Activated B cell treated with CpG ODN at 0.5 μM for 24 hours (primary cell): ENCODE measurements at regions of chr3 and their contacts with region 1.

Region 1: DNA sequence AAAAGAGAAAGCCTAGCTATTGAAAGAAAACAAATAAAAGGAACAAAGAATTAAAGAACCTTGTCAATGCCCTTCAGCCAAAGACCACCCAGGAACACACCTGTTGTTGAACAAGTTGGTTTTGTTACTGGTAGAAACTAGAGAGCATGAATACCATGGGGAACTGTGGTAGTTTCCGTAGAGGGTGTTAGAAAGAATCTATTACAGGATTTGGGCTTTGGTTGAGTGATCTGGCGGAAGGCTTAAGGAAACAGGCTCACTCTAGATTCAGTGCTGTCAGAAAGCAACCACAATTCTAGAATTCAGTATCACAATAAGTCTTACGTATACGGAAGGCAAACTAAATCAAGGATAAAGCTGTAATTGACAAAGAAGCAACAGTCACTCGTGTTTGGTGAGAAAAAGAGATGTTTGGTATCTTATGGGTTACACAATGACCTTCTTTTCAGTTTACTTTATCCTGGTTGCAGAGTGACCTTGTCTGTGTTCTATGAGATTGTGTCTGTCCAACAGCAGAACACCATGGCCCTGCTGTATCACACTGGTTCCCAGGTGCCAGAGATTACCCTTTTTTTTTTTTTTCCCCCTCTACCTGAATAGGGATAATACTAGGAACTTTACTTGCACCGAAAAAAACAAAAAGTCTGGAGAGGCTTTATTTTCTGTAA is 265.9 kb downstream of the SHQ1 start:
- DNase-seq: no peak
- ATAC-seq: peak; percentile 94
- H3K4me3 Mint-ChIP-seq: peak overlapping the region; percentile 60
- H3K27ac Mint-ChIP-seq: peak overlapping the region; percentile 5
- H3K4me1 Mint-ChIP-seq: peaks cover 32% of the 10 kb centered on the region
- H3K27me3 Mint-ChIP-seq: peaks cover 48% of the 10 kb centered on the region
- CTCF ChIP-seq: no peak

Region 2: GRCh38 chr3:72163809-72164634 is 418.3 kb before region 1 on chr3:
- CTCF ChIA-PET with region 1: no interaction called
- POLR2A ChIA-PET with region 1: no interaction called
- intact Hi-C with region 1: loop called (anchors 10 kb)
- DNase-seq: peak; percentile 53
- ATAC-seq: peak; percentile 87
- H3K4me3 Mint-ChIP-seq: peak overlapping the region; percentile 64
- H3K27ac Mint-ChIP-seq: peak overlapping the region; percentile 81
- H3K4me1 Mint-ChIP-seq: peaks cover 52% of the 10 kb centered on the region
- H3K27me3 Mint-ChIP-seq: peaks cover 2% of the 10 kb centered on the region
- CTCF ChIP-seq: no peak

Region 3: GRCh38 chr3:72426618-72427397 is 155.5 kb before region 1 on chr3:
- CTCF ChIA-PET with region 1: no interaction called
- POLR2A ChIA-PET with region 1: interaction called, 3 read pairs
- intact Hi-C with region 1: loop called (anchors 5 kb)
- DNase-seq: no peak
- ATAC-seq: peak; percentile 40
- H3K4me3 Mint-ChIP-seq: peak overlapping the region; percentile 74
- H3K27ac Mint-ChIP-seq: peak overlapping the region; percentile 30
- H3K4me1 Mint-ChIP-seq: peaks cover 76% of the 10 kb centered on the region
- H3K27me3 Mint-ChIP-seq: no peaks in the 10 kb centered on the region
- CTCF ChIP-seq: no peak

Region 4: DNA sequence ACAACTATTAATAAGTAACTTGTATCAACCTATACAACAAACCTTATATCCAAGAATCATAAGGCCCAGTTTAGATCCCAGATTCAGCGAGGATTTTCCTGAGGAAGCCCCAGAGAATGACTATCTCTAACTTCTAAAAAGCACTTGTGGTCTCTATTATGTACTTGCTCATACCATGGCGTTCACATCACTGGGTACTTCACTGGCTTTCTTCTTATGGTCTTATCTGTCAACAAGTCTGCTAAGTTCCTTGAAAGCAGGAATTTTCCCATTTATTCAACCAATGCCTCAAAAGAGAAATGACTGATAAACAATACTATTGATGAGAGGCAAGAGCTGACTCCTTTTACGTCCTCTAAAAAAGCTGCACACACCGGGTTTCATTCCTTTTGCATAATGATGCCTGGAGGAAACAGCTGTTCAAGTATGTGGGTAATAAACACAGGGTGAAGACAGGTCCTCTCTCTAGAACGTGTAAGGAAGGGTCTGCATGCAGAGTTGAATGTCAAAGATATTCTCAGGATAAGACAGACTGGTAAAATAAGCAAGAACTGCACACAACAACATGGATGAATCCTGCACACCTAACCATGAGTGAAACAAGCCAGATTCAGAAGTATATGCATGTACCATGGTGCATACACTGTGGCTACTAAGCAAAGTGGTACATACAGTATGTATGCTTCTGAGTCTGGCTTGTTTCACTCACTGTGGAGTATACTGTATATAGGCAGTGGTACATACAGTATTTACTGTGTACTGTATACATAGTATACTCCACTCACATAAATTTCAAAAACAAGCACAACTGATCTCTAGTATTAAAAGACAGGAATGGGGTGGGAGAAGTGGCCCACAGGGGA is 142.8 kb before region 1 on chr3:
- CTCF ChIA-PET with region 1: no interaction called
- POLR2A ChIA-PET with region 1: no interaction called
- intact Hi-C with region 1: loop called (anchors 5 kb)
- DNase-seq: no peak
- ATAC-seq: peak; percentile 16
- H3K4me3 Mint-ChIP-seq: peak overlapping the region; percentile 40
- H3K27ac Mint-ChIP-seq: no peak overlapping the region
- H3K4me1 Mint-ChIP-seq: peaks cover 77% of the 10 kb centered on the region
- H3K27me3 Mint-ChIP-seq: no peaks in the 10 kb centered on the region
- CTCF ChIP-seq: no peak

Region 5: DNA sequence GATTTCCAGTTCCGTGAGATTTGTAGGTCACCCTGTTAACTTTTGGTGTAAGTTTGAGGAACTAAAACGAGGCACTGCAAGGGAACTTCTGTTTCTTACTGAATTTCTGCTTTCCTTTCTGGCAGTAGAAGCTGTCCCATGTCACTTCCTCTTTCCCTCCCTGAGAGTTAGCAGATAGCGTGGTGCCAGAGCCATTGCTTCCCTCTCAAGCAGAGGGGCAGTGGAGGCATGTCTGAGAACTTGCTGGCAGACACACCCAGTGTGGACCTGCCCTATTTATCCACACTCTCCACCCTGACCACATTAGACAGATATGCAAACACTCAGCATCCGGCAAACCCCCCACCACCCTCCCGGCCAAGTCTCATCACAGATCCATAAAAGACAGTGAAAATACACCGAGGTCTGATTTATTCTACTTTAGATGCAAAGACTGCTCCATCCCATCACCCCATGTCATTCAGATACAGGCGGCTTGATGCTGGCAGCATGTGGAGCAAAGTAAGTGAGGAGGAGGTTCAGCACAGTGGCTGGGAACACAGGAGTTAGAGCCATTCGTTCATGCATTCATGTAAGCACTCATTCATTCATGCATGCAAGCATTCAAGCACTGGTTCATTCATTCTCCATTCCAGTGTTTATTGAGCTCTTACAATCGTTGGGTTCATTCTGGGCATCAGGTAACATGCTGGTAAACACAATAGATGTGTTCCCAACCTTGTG is 58.8 kb before region 1 on chr3:
- CTCF ChIA-PET with region 1: no interaction called
- POLR2A ChIA-PET with region 1: no interaction called
- intact Hi-C with region 1: loop called (anchors 5 kb)
- DNase-seq: peak; percentile 26
- ATAC-seq: peak; percentile 93
- H3K4me3 Mint-ChIP-seq: peak overlapping the region; percentile 64
- H3K27ac Mint-ChIP-seq: peak overlapping the region; percentile 80
- H3K4me1 Mint-ChIP-seq: peaks cover 42% of the 10 kb centered on the region
- H3K27me3 Mint-ChIP-seq: no peaks in the 10 kb centered on the region
- CTCF ChIP-seq: no peak

Region 6: GRCh38 chr3:72756900-72757299 is 174.6 kb after region 1 on chr3:
- CTCF ChIA-PET with region 1: no interaction called
- POLR2A ChIA-PET with region 1: no interaction called
- intact Hi-C with region 1: loop called (anchors 2 kb)
- DNase-seq: no peak
- ATAC-seq: peak; percentile 99
- H3K4me3 Mint-ChIP-seq: peak overlapping the region; percentile 67
- H3K27ac Mint-ChIP-seq: no peak overlapping the region
- H3K4me1 Mint-ChIP-seq: peaks cover 32% of the 10 kb centered on the region
- H3K27me3 Mint-ChIP-seq: peaks cover 33% of the 10 kb centered on the region
- CTCF ChIP-seq: no peak

Region 7: GRCh38 chr3:72830452-72831217 is 248.3 kb after region 1 on chr3:
- CTCF ChIA-PET with region 1: no interaction called
- POLR2A ChIA-PET with region 1: interaction called, 10 read pairs
- intact Hi-C with region 1: no loop called
- DNase-seq: no peak
- ATAC-seq: no peak
- H3K4me3 Mint-ChIP-seq: no peak overlapping the region
- H3K27ac Mint-ChIP-seq: no peak overlapping the region
- H3K4me1 Mint-ChIP-seq: no peaks in the 10 kb centered on the region
- H3K27me3 Mint-ChIP-seq: no peaks in the 10 kb centered on the region
- CTCF ChIP-seq: no peak